GM13976 (cell line): ENCODE measurements at regions of chr11 and their contacts with region 1.

Region 1: GRCh38 chr11:102604877-102605276 is 20.3 kb downstream of the MMP20 start:
- DNase-seq: no peak
- CTCF ChIP-seq: no peak

Region 2: GRCh38 chr11:102430158-102430836 is 174.6 kb before region 1 on chr11:
- in situ Hi-C with region 1: no loop called
- DNase-seq: peak; percentile 61
- CTCF ChIP-seq: no peak

Region 3: GRCh38 chr11:102530558-102530957 is 74.3 kb before region 1 on chr11 and contains the start of gene MMP7:
- in situ Hi-C with region 1: no loop called
- DNase-seq: no peak
- CTCF ChIP-seq: no peak

Region 4: GRCh38 chr11:102553835-102554282 is 51.0 kb before region 1 on chr11:
- in situ Hi-C with region 1: loop called (anchors 5 kb)
- DNase-seq: no peak
- CTCF ChIP-seq: no peak

Region 5: DNA sequence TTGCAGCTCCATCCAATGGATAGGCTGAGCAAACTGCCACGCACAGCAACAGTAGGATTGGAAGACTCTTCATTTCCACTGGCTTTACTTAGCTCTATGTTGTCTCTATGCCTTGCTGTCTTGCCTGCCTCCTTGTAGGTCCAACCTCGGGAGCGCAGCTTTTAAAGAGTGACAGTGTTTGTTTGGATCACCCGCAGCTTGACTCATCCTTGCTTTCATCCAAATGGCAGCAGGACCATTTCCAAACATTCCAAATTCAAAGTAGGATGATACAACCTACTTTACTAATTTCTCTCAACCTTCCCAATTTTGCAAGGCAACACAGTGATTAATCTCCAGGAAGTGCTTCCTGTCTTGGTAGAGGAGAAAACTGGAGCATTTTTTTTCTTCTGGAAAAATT is 238.6 kb after region 1 on chr11 and contains the start of gene MMP3:
- in situ Hi-C with region 1: no loop called
- DNase-seq: no peak
- CTCF ChIP-seq: no peak

Region 6: GRCh38 chr11:102900346-102900745 is 295.5 kb after region 1 on chr11:
- in situ Hi-C with region 1: no loop called
- DNase-seq: no peak
- CTCF ChIP-seq: no peak